Lower leg skin (tissue), 4 donors: ENCODE measurements at regions of chr18 and their contacts with region 1.

Region 1: GRCh38 chr18:3771121-3771971 is 321.4 kb downstream of the TGIF1 start:
- DNase-seq: peak; percentile 80 to 96
- H3K4me3 ChIP-seq: no peak overlapping the region
- CTCF ChIP-seq: peak in 1 of 3 donors; percentile 34
- POLR2A ChIP-seq: no peak

Region 2: DNA sequence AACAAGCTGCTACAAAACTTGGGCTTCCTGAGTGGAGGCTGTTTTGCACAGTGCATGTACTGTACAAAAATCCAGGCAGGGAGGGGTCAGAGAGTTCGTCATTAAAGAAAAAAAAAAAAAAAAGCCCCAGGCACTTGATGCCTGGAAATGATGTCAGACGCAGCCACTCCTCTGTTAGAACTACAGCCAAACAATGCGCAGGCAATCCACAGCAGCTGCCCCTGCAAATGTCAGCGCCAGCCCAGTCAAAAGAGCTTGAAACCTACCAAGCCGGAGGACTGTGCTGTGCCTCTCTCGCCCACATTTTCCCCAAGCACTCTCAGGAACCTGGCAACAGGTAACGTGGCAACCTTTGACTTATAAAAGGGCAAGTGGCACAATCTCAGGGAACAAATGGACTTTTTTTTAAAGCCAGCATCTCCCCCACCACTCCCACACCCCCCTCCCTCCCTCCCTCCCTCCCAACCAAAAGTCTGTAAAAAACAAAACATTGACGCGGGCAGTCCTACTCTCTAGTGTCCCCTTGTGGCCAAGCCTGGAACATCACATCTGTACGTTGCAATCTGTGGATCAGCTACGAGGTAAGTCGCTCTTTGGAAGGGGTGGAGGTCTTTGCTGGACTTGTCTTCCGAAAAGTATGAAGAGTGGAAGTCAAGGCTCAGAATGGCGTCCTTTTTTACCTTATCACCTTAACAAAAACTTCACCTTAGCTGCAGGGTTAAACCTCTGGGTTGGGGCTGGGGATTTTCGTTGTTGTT is 177.3 kb before region 1 on chr18:
- intact Hi-C with region 1: no loop called
- DNase-seq: peak; percentile 93 to 98
- H3K4me3 ChIP-seq: peak overlapping the region; percentile 0
- CTCF ChIP-seq: peak in 1 of 3 donors; percentile 73
- POLR2A ChIP-seq: peak in 1 of 2 donors; percentile 3

Region 3: GRCh38 chr18:3799176-3799914 is 28.0 kb after region 1 on chr18:
- intact Hi-C with region 1: no loop called
- DNase-seq: no peak
- H3K4me3 ChIP-seq: no peak overlapping the region
- CTCF ChIP-seq: no peak
- POLR2A ChIP-seq: no peak

Region 4: GRCh38 chr18:4004183-4004829 is 233.0 kb after region 1 on chr18:
- intact Hi-C with region 1: loop called (anchors 10 kb)
- DNase-seq: no peak
- H3K4me3 ChIP-seq: no peak overlapping the region
- CTCF ChIP-seq: no peak
- POLR2A ChIP-seq: no peak